IMR-90 (cell line): ENCODE measurements at regions of chr17 and their contacts with region 1.

Region 1: DNA sequence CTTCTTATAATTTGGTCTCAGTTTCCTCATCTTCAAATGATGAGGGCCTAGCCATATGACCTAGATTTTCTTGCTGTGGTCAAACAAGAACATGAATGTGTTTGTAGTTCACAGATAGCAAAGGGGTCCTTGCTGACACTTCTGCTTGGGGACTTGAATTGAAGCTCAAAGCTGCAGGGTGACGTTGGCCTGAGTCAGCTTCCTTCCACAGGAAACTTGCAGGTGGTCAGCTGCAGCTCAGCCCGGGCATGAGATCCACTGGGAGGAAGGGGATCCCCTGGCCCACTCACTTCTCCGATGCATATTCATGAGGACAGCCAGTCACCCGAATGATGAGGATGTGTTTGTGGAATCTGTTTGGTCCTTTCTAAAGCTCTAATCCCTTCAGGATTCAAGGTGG is 42.6 kb upstream of the AXIN2 start:
- DNase-seq: peak; percentile 9
- ATAC-seq: no peak
- H3K4me3 ChIP-seq: no peak overlapping the region
- H3K27ac ChIP-seq: no peak overlapping the region
- H3K4me1 ChIP-seq: no peaks in the 10 kb centered on the region
- H3K27me3 ChIP-seq: peaks cover 15% of the 10 kb centered on the region
- CTCF ChIP-seq: no peak
- POLR2A ChIP-seq: no peak
- RAD21 ChIP-seq: no peak

Region 2: DNA sequence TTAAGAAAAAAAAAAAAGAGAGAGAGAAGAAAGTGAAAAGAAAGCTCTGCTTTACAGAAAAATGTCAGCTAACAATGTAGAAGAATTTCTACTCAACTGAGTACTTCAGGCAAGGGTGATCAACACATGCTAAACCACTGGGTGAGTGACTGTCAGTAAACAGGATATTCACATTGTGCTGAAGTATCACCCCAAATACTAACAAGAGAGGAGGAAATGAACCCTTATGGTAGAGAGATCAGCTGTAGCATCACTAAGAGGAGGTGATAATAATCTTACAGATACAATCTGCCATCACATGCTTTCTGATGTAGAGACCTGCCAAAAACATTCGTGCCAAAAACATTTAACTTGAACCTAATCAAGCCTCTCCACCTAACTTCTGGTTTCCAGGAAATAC is 1552.9 kb before region 1 on chr17:
- CTCF ChIA-PET with region 1: no interaction called
- POLR2A ChIA-PET with region 1: no interaction called
- dilution Hi-C with region 1: no loop called
- in situ Hi-C with region 1: no loop called
- intact Hi-C with region 1: no loop called
- DNase-seq: no peak
- ATAC-seq: no peak
- H3K4me3 ChIP-seq: no peak overlapping the region
- H3K27ac ChIP-seq: no peak overlapping the region
- H3K4me1 ChIP-seq: no peaks in the 10 kb centered on the region
- H3K27me3 ChIP-seq: no peaks in the 10 kb centered on the region
- CTCF ChIP-seq: no peak
- POLR2A ChIP-seq: no peak
- RAD21 ChIP-seq: no peak

Region 3: DNA sequence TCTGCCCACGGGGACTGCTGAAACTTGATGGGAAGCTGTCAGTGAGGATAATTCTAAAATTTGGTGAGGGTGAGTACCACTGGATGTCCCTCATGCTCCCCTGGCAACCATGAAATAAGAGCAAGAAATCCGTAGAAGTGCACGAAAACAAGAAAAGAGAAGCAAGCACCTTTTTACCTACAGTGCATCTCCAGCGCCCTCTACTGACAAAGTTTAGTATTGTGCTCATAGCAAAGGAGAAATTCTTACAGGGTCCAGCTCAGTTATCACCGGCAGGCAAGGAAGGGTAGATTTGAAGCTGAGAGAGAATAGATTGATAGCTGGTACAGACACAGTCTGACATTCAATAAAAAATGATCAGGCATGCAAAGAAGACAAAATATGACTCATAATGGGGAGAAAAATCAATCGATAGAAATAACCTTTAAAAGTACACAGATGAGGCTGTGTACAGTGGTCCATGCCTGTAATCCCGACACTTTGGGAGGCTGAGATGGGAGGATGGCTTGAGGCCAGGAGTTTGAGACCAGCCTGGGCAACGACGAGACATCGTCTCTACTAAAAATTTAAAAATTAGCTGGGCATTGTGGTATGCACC is 1312.7 kb before region 1 on chr17:
- CTCF ChIA-PET with region 1: no interaction called
- POLR2A ChIA-PET with region 1: no interaction called
- dilution Hi-C with region 1: no loop called
- in situ Hi-C with region 1: no loop called
- intact Hi-C with region 1: no loop called
- DNase-seq: no peak
- ATAC-seq: no peak
- H3K4me3 ChIP-seq: no peak overlapping the region
- H3K27ac ChIP-seq: no peak overlapping the region
- H3K4me1 ChIP-seq: peaks cover 1% of the 10 kb centered on the region
- H3K27me3 ChIP-seq: peaks cover 23% of the 10 kb centered on the region
- CTCF ChIP-seq: peak; percentile 30
- POLR2A ChIP-seq: no peak
- RAD21 ChIP-seq: 0 out of 2 replicates have a peak, but pooled peaks have one; percentile 2

Region 4: GRCh38 chr17:65515959-65516948 is 87.8 kb before region 1 on chr17:
- CTCF ChIA-PET with region 1: no interaction called
- POLR2A ChIA-PET with region 1: no interaction called
- dilution Hi-C with region 1: no loop called
- in situ Hi-C with region 1: no loop called
- intact Hi-C with region 1: no loop called
- DNase-seq: peak; percentile 66
- ATAC-seq: peak; percentile 91
- H3K4me3 ChIP-seq: no peak overlapping the region
- H3K27ac ChIP-seq: no peak overlapping the region
- H3K4me1 ChIP-seq: peaks cover 6% of the 10 kb centered on the region; the same call in 1 of the 2 replicates
- H3K27me3 ChIP-seq: peaks cover 12% of the 10 kb centered on the region
- CTCF ChIP-seq: no peak
- POLR2A ChIP-seq: no peak
- RAD21 ChIP-seq: no peak

Region 5: GRCh38 chr17:65568918-65569317 is 35.2 kb before region 1 on chr17:
- CTCF ChIA-PET with region 1: no interaction called
- POLR2A ChIA-PET with region 1: interaction called, 16 read pairs
- dilution Hi-C with region 1: no loop called
- in situ Hi-C with region 1: no loop called
- intact Hi-C with region 1: no loop called
- DNase-seq: no peak
- ATAC-seq: no peak
- H3K4me3 ChIP-seq: no peak overlapping the region
- H3K27ac ChIP-seq: no peak overlapping the region
- H3K4me1 ChIP-seq: no peaks in the 10 kb centered on the region; the same call in 1 of the 2 replicates
- H3K27me3 ChIP-seq: peaks cover 11% of the 10 kb centered on the region
- CTCF ChIP-seq: no peak
- POLR2A ChIP-seq: no peak
- RAD21 ChIP-seq: no peak